Tibial artery (tissue), 4 donors: ENCODE measurements at regions of chr17 and their contacts with region 1.

Region 1: DNA sequence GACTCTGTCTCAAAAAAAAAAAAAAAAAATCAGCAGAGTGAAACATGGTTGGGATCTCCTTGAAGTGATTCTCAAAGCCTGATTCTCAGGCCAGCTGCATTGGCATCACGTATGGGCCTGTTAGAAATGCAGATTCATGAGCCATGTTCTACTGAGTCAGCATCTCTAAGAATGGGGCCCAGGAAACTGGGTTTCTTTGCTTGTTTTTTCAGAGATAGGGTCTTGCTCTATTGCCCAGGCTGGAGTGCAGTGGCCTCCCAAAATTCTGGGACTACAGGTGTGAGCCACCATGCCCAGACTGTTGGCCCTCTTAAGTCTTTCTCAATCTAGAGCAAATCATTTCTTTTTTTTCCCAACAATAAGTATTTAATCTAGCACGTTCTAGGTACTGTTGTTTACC is 47.7 kb downstream of the CDK12 start:
- DNase-seq: no peak
- H3K4me3 ChIP-seq: no peak overlapping the region
- H3K27ac ChIP-seq: no peak overlapping the region
- H3K4me1 ChIP-seq: no peaks in the 10 kb centered on the region
- H3K27me3 ChIP-seq: no peaks in the 10 kb centered on the region
- CTCF ChIP-seq: no peak

Region 2: GRCh38 chr17:39429600-39429999 is 79.4 kb before region 1 on chr17:
- intact Hi-C with region 1: loop called (anchors 10 kb)
- DNase-seq: peak in 1 of 2 donors; percentile 6
- H3K4me3 ChIP-seq: no peak overlapping the region
- H3K27ac ChIP-seq: no peak overlapping the region
- H3K4me1 ChIP-seq: no peaks in the 10 kb centered on the region
- H3K27me3 ChIP-seq: no peaks in the 10 kb centered on the region
- CTCF ChIP-seq: no peak

Region 3: GRCh38 chr17:39538866-39539265 is 29.9 kb after region 1 on chr17:
- intact Hi-C with region 1: no loop called
- DNase-seq: no peak
- H3K4me3 ChIP-seq: no peak overlapping the region
- H3K27ac ChIP-seq: no peak overlapping the region
- H3K4me1 ChIP-seq: no peaks in the 10 kb centered on the region
- H3K27me3 ChIP-seq: no peaks in the 10 kb centered on the region
- CTCF ChIP-seq: no peak